Activated CD4-positive, alpha-beta T cell treated with anti-CD3 and anti-CD28 coated beads for 36 hours (primary cell): ENCODE measurements at regions of chr2 and their contacts with region 1.

Region 1: DNA sequence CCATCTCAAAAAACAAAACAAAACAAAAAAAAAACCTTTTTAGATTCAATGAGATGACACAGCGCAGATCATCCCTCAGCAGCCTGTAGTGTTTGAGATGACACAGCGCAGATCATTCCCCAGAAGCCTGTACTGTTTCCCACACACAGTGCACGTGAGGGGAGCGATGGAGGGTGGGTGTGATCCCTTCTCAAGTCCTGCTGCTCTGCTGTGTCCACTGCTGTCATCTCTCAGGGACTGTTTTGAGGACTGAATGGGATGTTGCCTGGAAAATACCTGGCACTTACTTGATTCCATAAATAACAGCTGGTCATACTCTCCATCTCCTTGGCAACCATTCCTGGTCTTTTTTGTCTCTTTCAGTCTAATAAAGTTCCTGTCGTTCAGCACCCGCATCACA is 25.7 kb downstream of the TGOLN2 start:
- DNase-seq: no peak
- ATAC-seq: no peak
- H3K4me3 Mint-ChIP-seq: no peak overlapping the region
- H3K27ac Mint-ChIP-seq: no peak overlapping the region
- H3K4me1 Mint-ChIP-seq: peaks cover 11% of the 10 kb centered on the region
- H3K27me3 Mint-ChIP-seq: no peaks in the 10 kb centered on the region

Region 2: DNA sequence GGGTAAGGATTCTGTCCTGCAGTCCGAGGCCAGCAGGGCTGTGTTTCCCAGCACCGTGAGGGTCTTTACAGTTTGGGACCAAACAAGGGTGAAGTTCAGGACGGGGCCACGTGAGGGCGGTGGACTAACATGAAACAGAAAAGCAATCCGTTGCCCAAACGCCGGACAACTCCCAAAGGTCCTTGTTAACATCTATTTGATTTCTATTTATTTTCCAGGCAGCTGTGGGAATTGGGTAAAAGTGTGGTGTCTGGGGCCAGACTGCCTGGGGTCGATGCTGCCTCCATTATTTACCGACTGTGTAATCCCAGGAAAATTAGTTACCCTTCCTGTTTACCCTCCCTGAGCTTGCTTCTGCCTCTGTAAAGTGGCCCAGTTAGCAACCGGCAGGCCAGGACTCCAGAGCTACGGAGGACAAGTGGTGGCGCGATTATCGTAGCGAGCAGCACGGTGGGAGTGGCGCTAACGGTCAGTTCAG is 235.2 kb before region 1 on chr2:
- CTCF ChIA-PET with region 1: interaction called, 12 read pairs
- POLR2A ChIA-PET with region 1: no interaction called
- intact Hi-C with region 1: loop called (anchors 1 kb)
- DNase-seq: peak; percentile 76
- ATAC-seq: peak; percentile 55
- H3K4me3 Mint-ChIP-seq: no peak overlapping the region
- H3K27ac Mint-ChIP-seq: no peak overlapping the region
- H3K4me1 Mint-ChIP-seq: peaks cover 6% of the 10 kb centered on the region
- H3K27me3 Mint-ChIP-seq: peaks cover 9% of the 10 kb centered on the region

Region 3: DNA sequence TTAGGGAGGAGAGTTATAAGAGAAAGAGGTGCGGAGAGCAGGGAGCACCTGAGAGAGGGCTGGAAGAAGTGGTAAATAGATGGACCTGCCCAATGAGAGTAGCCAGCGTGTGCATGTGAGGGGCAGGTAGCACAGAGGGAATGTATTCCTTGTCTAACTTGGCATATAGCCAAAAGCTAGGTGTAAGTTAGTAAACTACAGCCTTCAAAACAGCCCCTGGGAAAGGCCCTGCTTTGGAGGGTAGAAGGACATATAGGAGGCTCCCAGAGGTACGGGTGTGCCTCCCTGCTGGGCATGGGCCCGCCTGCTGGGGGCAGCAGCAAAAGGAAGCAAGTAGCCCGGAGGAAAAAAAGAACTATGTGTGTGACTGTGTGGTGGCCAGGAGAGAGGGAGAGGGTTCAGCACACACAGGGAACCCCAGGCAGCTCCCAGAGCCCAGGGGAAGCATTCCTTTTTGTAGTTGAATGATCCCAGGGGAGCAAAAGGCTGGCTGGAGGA is 120.9 kb before region 1 on chr2:
- CTCF ChIA-PET with region 1: interaction called, 4 read pairs
- POLR2A ChIA-PET with region 1: no interaction called
- intact Hi-C with region 1: loop called in 1 of 2 experiments (anchors 1 kb)
- DNase-seq: no peak
- ATAC-seq: no peak
- H3K4me3 Mint-ChIP-seq: no peak overlapping the region
- H3K27ac Mint-ChIP-seq: no peak overlapping the region
- H3K4me1 Mint-ChIP-seq: no peaks in the 10 kb centered on the region
- H3K27me3 Mint-ChIP-seq: peaks cover 5% of the 10 kb centered on the region

Region 4: GRCh38 chr2:85288244-85288725 is 13.8 kb before region 1 on chr2:
- CTCF ChIA-PET with region 1: interaction called, 16 read pairs
- POLR2A ChIA-PET with region 1: no interaction called
- intact Hi-C with region 1: no loop called
- DNase-seq: no peak
- ATAC-seq: no peak
- H3K4me3 Mint-ChIP-seq: no peak overlapping the region
- H3K27ac Mint-ChIP-seq: no peak overlapping the region
- H3K4me1 Mint-ChIP-seq: peaks cover 19% of the 10 kb centered on the region
- H3K27me3 Mint-ChIP-seq: no peaks in the 10 kb centered on the region

Region 5: GRCh38 chr2:85445316-85446295 is 143.5 kb after region 1 on chr2:
- CTCF ChIA-PET with region 1: no interaction called
- POLR2A ChIA-PET with region 1: no interaction called
- intact Hi-C with region 1: no loop called
- DNase-seq: no peak
- ATAC-seq: no peak
- H3K4me3 Mint-ChIP-seq: no peak overlapping the region
- H3K27ac Mint-ChIP-seq: no peak overlapping the region
- H3K4me1 Mint-ChIP-seq: no peaks in the 10 kb centered on the region
- H3K27me3 Mint-ChIP-seq: no peaks in the 10 kb centered on the region

Region 6: DNA sequence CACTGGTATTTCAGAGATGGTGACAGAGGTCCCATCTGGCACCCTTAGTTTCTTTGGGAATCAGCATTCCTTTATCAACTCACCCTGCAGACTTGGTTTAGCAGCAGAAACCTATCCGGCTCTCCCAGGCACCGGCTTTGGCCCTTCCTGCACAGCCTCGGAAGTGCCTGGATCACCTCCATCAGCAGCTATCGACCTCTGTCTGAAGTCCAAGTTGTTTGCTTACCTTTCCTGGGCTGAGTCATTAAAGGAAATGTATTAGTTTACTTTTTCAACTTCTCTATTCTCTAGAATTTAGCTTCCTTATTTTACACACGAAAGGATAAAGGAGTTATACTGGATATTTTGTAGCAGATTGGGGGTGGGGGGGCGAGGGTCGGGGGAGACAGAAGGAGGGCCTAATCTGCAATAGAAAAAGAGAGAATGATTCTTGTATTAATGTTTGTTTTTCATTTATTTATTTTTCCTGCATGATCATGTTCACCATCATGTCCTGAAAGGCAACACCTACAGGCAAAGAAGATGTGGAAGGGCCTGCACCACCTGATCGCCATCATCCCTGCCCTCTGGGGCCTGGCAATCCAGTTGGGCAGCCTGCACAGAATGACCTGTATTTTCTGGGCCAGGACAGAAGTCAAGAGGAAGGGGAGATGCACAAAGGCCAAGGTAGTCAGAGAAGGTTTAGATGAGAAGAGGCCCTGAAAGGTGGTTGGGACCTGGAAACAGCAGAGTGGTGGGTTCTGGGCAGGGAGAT is 214.7 kb after region 1 on chr2:
- CTCF ChIA-PET with region 1: no interaction called
- POLR2A ChIA-PET with region 1: no interaction called
- intact Hi-C with region 1: no loop called
- DNase-seq: no peak
- ATAC-seq: no peak
- H3K4me3 Mint-ChIP-seq: no peak overlapping the region
- H3K27ac Mint-ChIP-seq: no peak overlapping the region
- H3K4me1 Mint-ChIP-seq: no peaks in the 10 kb centered on the region
- H3K27me3 Mint-ChIP-seq: no peaks in the 10 kb centered on the region

Region 7: DNA sequence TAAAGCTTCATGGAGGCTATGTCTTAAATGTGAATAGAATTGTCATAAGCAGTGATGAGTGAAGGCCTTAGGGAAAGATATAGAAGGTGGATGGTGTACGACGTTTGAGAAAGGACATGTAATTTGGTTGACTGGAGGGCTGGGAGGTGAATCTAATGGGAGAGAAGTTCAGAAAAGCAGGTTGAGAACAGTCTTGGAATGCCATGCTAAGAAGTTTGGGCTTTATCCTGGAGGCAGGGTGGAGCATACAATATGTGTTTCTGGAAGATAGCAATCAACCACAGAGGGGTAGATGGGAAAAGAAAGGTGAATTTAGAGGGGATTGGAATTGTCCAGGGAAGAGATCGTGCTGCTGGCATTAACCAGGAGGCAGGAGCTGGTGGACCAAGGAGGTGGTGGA is 268.2 kb after region 1 on chr2:
- CTCF ChIA-PET with region 1: no interaction called
- POLR2A ChIA-PET with region 1: no interaction called
- intact Hi-C with region 1: no loop called
- DNase-seq: no peak
- ATAC-seq: no peak
- H3K4me3 Mint-ChIP-seq: no peak overlapping the region
- H3K27ac Mint-ChIP-seq: no peak overlapping the region
- H3K4me1 Mint-ChIP-seq: no peaks in the 10 kb centered on the region
- H3K27me3 Mint-ChIP-seq: no peaks in the 10 kb centered on the region